ENCODE measurements at regions of chr9 and their contacts with region 1.

Region 1: GRCh38 chr9:115883457-115884329 is 269.9 kb upstream of the PAPPA start:
- DNase-seq: peak; percentile 46
- H3K4me3 ChIP-seq: no peak overlapping the region
- H3K27ac ChIP-seq: no peak overlapping the region
- H3K27me3 ChIP-seq: no peaks in the 10 kb centered on the region
- CTCF ChIP-seq: peak; percentile 81

Region 2: DNA sequence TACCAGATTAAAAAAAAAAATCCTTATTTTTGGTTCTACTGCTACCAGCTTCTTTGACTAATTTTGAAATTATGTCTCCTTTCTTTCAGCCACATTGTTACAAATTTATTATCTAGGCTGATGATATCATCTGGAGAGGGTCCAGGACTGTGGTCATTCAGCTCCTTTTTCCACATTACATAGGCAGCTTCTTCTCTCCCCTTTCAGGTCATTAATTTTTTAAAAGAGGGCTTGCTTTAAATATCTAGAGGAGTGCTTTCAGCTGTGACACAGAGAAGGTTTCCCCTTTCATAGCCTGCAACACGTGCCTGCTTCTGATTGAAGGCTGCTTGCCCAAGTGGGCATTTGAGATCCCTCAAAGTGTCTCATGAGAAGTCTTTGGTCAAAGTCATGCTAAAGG is 114.2 kb after region 1 on chr9:
- in situ Hi-C with region 1: loop called (anchors 25 kb)
- DNase-seq: peak; percentile 81
- H3K4me3 ChIP-seq: no peak overlapping the region
- H3K27ac ChIP-seq: peak overlapping the region; percentile 82
- H3K27me3 ChIP-seq: no peaks in the 10 kb centered on the region
- CTCF ChIP-seq: no peak

Region 3: GRCh38 chr9:116313638-116314037 is 429.9 kb after region 1 on chr9:
- in situ Hi-C with region 1: no loop called
- DNase-seq: no peak
- H3K4me3 ChIP-seq: no peak overlapping the region
- H3K27ac ChIP-seq: no peak overlapping the region
- H3K27me3 ChIP-seq: no peaks in the 10 kb centered on the region
- CTCF ChIP-seq: peak; percentile 38

Measured in brain microvascular endothelial cell (primary cell).